ENCODE measurements at regions of chr17 and their contacts with region 1.

Region 1: GRCh38 chr17:79340333-79341221 is 266.0 kb downstream of the ENGASE start:
- DNase-seq: no peak
- H3K4me3 ChIP-seq: no peak overlapping the region
- H3K27ac ChIP-seq: no peak overlapping the region
- H3K4me1 ChIP-seq: peaks cover 7% of the 10 kb centered on the region
- H3K27me3 ChIP-seq: peaks cover 2% of the 10 kb centered on the region
- CTCF ChIP-seq: no peak

Region 2: GRCh38 chr17:78970834-78971773 is 369.5 kb before region 1 on chr17:
- CTCF ChIA-PET with region 1: no interaction called
- dilution Hi-C with region 1: no loop called
- in situ Hi-C with region 1: no loop called
- intact Hi-C with region 1: no loop called
- DNase-seq: peak; percentile 47
- H3K4me3 ChIP-seq: no peak overlapping the region
- H3K27ac ChIP-seq: no peak overlapping the region
- H3K4me1 ChIP-seq: peaks cover 32% of the 10 kb centered on the region
- H3K27me3 ChIP-seq: no peaks in the 10 kb centered on the region
- CTCF ChIP-seq: peak; percentile 84 to 88

Region 3: DNA sequence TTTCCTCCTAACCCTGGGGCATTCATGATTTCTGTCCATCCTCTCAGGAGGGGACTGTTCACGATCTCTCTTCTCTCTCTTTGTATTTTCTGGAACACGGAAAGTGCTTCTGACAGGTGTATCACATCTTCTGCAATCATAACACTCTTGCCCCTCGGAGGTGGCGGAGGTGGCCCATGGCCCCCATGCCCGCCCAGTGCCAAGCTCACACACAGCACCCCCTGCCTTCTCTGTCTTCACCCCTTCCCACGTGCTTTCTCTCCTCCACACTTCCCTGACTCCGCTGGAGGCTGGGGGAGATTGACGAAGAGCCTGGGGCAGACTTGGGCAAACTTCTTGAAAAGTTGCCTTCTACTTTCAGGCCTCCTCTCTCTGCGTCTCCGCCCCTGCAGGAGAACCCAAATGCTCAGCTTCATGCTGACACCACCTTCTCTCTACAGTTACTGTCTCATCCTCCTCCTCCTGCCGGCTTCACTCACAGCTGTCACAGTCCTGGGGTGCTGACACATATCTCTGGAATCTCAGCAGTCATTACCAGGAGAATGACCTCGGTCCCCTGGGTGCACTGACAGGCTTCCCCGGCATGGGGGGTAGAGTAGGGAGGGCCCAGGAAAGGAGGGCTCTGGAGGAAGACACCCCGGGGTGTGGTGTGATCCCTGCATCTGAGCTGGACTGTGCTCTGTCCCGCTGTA is 138.9 kb before region 1 on chr17:
- CTCF ChIA-PET with region 1: no interaction called
- dilution Hi-C with region 1: no loop called
- in situ Hi-C with region 1: loop called in 1 of 2 experiments (anchors 25 kb)
- intact Hi-C with region 1: no loop called
- DNase-seq: peak; percentile 23
- H3K4me3 ChIP-seq: no peak overlapping the region
- H3K27ac ChIP-seq: no peak overlapping the region
- H3K4me1 ChIP-seq: peaks cover 5% of the 10 kb centered on the region
- H3K27me3 ChIP-seq: peaks cover 6% of the 10 kb centered on the region
- CTCF ChIP-seq: no peak

Region 4: GRCh38 chr17:79319454-79319853 is 21.1 kb before region 1 on chr17:
- CTCF ChIA-PET with region 1: no interaction called
- dilution Hi-C with region 1: no loop called
- in situ Hi-C with region 1: no loop called
- intact Hi-C with region 1: no loop called
- DNase-seq: no peak
- H3K4me3 ChIP-seq: no peak overlapping the region
- H3K27ac ChIP-seq: no peak overlapping the region
- H3K4me1 ChIP-seq: no peaks in the 10 kb centered on the region
- H3K27me3 ChIP-seq: peaks cover 17% of the 10 kb centered on the region
- CTCF ChIP-seq: no peak